Lower leg skin (tissue), 4 donors: ENCODE measurements at regions of chr16 and their contacts with region 1.

Region 1: DNA sequence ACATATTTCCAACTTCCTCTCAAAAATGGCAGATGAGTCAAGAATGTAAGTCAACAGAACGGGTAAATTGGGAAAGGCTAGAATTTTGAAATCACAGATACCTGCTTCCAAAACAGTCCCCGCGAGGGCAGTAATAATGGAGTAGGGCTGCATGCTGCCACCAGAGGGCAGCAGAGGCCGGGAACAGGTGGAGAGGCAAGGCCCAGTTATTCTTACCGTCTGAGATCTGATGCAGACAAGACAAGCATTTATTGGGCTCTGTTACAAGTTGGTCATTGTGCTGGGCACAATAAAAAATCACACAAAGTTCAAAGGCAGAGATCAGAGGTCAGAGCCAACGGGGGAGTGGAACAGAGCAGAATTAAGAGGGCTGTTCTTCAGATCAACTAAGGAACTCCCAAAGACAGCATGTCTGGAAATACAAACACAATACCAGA is 8.8 kb upstream of the MLKL start:
- DNase-seq: peak; percentile 73 to 96
- H3K4me3 ChIP-seq: no peak overlapping the region
- CTCF ChIP-seq: peak in 1 of 3 donors; percentile 58
- POLR2A ChIP-seq: no peak

Region 2: GRCh38 chr16:74862741-74863244 is 153.3 kb after region 1 on chr16:
- intact Hi-C with region 1: loop called (anchors 2 kb)
- DNase-seq: no peak
- H3K4me3 ChIP-seq: no peak overlapping the region
- CTCF ChIP-seq: no peak
- POLR2A ChIP-seq: no peak